ENCODE measurements at regions of chr7 and their contacts with region 1.

Region 1: DNA sequence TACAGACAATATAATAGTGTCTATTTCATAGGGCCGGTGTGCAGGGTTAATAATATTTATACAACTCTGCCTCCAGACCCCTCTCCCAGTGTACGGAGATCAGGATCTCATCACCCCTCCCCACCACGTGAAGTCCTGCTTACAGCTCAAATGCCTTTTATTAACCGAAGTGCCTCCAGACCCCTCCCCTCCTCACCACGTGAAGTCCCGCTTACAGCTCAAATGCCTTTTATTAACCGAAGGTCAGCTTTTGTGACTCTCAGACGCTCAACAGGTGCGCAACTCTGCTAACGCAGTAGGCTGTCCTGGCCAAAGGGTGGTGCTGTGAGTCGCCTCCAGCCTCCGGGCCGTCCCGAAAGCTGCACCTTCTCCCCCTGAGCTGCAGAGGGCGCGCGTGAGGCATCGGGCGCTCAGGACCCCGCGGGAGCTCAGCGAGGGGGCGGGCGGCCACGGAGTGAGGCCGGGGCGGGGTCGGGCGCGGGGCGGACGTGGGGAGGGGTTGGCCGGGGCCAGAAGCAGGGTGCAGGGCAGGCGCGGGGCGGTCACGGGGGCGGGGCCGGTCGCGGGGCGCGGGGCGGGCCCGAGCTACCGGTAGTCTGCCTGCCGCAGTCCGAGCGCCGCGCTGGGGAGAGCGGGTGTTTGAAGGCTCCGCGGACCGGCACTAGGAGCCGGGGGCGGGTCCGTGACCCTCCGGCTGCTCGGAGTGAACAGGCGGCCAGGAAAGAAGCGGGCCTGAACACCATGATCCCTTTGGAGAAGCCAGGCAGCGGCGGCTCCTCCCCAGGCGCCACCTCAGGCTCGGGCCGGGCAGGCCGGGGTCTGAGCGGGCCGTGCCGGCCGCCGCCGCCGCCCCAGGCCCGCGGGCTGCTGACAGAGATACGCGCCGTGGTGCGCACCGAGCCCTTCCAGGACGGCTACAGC is at the start of gene STK17A:
- DNase-seq: peak; percentile 90 to 97 (median 96)
- ATAC-seq: peak; percentile 98
- H3K4me3 ChIP-seq: peak within 1 kb of the TSS; percentile 88
- H3K27ac ChIP-seq: peak within 1 kb of the TSS; percentile 84
- H3K4me1 ChIP-seq: no peaks in the 10 kb centered on the region
- H3K27me3 ChIP-seq: no peaks in the 10 kb centered on the region
- total RNA-seq, gene STK17A: 15.7 to 43.3 (median 35.0) TPM

Region 2: GRCh38 chr7:43439631-43440401 is 142.9 kb before region 1 on chr7:
- intact Hi-C with region 1: no loop called
- DNase-seq: peak in 1 of 3 donors; percentile 54
- ATAC-seq: peak; percentile 35 to 43
- H3K4me3 ChIP-seq: no peak overlapping the region
- H3K27ac ChIP-seq: no peak overlapping the region
- H3K4me1 ChIP-seq: no peaks in the 10 kb centered on the region
- H3K27me3 ChIP-seq: no peaks in the 10 kb centered on the region

Region 3: GRCh38 chr7:43700059-43700501 is 117.3 kb after region 1 on chr7:
- intact Hi-C with region 1: loop called (anchors 2 to 5 kb)
- DNase-seq: no peak
- ATAC-seq: peak in 1 of 2 donors; percentile 69
- H3K4me3 ChIP-seq: no peak overlapping the region
- H3K27ac ChIP-seq: no peak overlapping the region
- H3K4me1 ChIP-seq: no peaks in the 10 kb centered on the region
- H3K27me3 ChIP-seq: no peaks in the 10 kb centered on the region

Region 4: DNA sequence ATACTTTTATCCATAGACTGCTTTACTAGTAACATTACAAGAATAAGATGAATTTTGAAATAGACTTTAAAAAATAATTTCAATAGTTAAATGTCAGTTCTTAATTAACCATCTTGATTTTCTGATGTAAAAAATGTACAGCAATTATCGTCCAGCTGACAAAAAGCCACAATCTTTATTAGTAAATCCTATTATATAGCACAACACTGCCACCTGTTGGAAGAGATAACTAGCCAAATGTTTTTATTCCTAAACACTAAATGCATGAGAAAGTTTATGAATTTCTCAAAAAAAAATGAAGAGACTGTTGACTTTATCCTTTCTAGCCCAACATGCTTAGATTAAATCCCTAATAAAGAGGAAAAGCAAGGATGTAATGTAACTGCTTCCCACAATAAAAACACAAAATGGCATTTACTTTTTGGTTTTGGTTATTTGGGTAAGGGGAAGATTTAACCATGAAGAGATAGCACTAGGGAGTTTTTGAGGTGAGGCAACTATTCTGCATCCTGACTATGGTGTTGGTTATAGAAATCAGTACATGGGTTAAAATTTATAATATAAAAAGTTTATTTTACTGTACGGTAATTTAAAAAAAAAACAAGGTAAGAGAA is 138.5 kb after region 1 on chr7:
- intact Hi-C with region 1: loop called in 3 of 4 experiments (anchors 5 kb)
- DNase-seq: no peak
- ATAC-seq: no peak
- H3K4me3 ChIP-seq: no peak overlapping the region
- H3K27ac ChIP-seq: no peak overlapping the region
- H3K4me1 ChIP-seq: no peaks in the 10 kb centered on the region
- H3K27me3 ChIP-seq: no peaks in the 10 kb centered on the region

Region 5: DNA sequence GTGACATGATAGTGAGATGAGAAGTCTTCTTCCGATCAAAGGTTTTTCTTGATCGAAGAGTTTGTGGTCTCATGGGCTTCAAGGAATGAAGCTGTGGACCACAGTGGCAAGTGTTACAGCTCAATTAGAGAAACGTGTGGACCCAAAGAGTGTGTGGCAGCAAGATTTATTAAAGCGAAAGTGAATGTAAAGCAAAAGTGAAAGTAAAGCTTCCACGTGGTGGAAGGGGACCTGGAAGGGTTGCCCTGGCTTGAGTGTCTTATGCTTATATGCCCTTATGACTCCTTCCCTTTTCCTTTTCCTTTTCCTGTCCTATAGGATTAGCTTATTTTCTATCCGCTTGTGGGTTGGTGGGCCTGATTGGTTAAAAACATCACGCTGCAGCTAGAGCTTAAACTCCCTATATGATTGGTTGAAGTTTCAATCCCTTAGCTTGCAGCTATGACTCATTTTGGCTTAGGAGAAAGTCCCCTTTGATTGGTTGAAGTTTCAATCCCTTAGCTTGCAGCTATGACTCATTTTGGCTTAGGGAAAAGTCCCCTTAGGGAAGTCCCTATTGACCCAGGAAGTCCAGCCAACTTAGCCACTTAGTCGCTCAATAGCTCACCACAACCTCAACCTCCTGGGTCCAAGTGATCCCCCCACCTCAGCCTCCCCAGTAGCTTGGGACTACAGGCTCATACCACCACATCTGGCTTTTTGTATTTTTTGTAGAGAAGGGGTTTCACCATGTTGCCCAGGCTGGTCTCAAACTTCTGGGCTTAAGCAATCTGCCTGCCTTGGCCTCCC is 251.9 kb after region 1 on chr7:
- intact Hi-C with region 1: loop called in 1 of 4 experiments (anchors 5 kb)
- DNase-seq: no peak
- ATAC-seq: peak in 1 of 2 donors; percentile 15
- H3K4me3 ChIP-seq: no peak overlapping the region
- H3K27ac ChIP-seq: no peak overlapping the region
- H3K4me1 ChIP-seq: no peaks in the 10 kb centered on the region
- H3K27me3 ChIP-seq: no peaks in the 10 kb centered on the region

Measured in right cardiac atrium (tissue), 5 donors.